ENCODE measurements at regions of chr13 and their contacts with region 1.

Region 1: DNA sequence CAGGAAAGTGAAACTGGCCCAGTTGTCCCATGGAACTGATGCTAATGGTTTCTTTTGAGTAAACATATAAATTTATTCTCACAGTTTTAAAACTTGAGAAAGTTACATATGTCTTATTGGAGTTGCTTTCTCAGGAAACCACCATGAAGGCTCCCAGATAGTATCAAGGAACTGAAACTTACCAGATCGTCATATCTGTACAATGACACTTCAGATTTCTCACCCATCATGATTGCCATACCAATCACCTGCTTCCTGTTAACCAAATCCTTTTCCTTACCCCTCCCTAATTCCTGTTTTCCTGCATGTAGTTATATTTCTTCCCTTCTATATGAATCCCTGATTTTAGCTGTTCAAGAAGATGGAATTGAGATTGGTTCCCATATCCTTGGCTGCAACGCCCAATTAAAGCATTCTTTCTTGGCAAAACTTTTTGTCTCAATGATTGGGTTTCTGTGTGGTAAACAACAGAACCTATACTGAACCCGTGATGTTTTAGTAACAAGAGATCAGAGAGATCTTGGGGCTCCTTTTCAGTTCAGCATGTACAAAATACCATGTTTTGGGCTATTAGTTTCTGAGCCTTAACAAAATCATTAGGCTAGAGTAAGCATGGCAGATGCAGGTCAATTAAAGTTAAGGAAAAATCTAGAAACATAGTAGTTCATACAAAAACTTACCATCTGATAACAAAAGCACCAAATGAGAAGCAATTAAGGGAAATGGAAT is 781.3 kb upstream of the MIR17HG start:
- DNase-seq: no peak
- H3K4me3 ChIP-seq: no peak overlapping the region
- H3K27ac ChIP-seq: no peak overlapping the region
- H3K27me3 ChIP-seq: no peaks in the 10 kb centered on the region
- CTCF ChIP-seq: no peak

Region 2: DNA sequence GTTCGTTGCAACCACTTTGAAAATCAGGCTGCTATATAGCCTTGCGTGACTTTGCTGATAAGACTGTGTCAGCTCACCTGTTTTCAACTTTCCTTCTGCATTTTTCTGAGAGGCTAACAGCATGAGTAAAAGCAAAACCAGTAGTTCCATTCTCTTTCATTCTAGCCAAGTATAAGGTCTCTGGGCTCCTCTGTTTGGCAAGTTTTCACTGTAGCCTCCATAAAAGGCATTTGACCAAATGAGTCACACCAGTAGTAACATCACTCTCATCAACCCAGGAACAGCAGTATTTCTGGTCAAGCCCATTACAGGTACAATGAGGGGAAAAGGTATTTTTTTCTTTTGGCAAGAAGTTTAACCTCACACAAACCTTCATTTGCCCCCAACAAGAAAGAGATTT is 368.4 kb before region 1 on chr13:
- CTCF ChIA-PET with region 1: interaction called, 10 read pairs
- POLR2A ChIA-PET with region 1: no interaction called
- DNase-seq: no peak
- H3K4me3 ChIP-seq: no peak overlapping the region
- H3K27ac ChIP-seq: no peak overlapping the region
- H3K27me3 ChIP-seq: no peaks in the 10 kb centered on the region
- CTCF ChIP-seq: no peak